Transverse colon (tissue), 4 donors: ENCODE measurements at regions of chr15 and their contacts with region 1.

Region 1: DNA sequence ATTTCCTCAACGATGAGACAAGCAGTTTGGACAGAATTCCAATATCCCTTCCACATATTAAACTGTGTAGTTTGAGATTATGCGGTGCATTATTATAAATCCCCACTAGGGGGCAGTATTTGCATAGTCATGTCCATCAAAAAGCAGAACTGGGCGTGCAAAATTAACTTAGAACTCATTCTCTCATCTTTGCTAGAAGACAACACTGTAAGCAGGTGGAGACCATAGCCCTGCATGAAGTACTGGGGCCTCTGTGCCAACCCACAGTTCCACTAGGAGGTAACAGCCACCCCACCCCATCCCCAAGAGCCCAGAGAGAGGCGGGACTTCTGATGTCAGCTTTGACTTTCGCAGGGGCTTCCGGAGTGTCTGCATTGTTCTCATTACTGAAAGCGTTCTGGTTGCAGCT is 106.6 kb upstream of the TMC3 start:
- DNase-seq: no peak
- H3K4me3 ChIP-seq: no peak overlapping the region
- H3K27ac ChIP-seq: no peak overlapping the region
- H3K4me1 ChIP-seq: no peaks in the 10 kb centered on the region
- H3K27me3 ChIP-seq: no peaks in the 10 kb centered on the region
- CTCF ChIP-seq: peak; percentile 85 to 93 (median 90)
- EP300 ChIP-seq: no peak
- POLR2A ChIP-seq: no peak

Region 2: GRCh38 chr15:81939604-81940440 is 459.2 kb after region 1 on chr15:
- in situ Hi-C with region 1: loop called in 2 of 4 experiments (anchors 25 kb)
- intact Hi-C with region 1: no loop called
- DNase-seq: no peak
- H3K4me3 ChIP-seq: no peak overlapping the region
- H3K27ac ChIP-seq: no peak overlapping the region
- H3K4me1 ChIP-seq: no peaks in the 10 kb centered on the region
- H3K27me3 ChIP-seq: no peaks in the 10 kb centered on the region
- CTCF ChIP-seq: peak; percentile 45 to 71 (median 59)
- EP300 ChIP-seq: no peak
- POLR2A ChIP-seq: no peak